A673 (cell line): ENCODE measurements at regions of chr18 and their contacts with region 1.

Region 1: DNA sequence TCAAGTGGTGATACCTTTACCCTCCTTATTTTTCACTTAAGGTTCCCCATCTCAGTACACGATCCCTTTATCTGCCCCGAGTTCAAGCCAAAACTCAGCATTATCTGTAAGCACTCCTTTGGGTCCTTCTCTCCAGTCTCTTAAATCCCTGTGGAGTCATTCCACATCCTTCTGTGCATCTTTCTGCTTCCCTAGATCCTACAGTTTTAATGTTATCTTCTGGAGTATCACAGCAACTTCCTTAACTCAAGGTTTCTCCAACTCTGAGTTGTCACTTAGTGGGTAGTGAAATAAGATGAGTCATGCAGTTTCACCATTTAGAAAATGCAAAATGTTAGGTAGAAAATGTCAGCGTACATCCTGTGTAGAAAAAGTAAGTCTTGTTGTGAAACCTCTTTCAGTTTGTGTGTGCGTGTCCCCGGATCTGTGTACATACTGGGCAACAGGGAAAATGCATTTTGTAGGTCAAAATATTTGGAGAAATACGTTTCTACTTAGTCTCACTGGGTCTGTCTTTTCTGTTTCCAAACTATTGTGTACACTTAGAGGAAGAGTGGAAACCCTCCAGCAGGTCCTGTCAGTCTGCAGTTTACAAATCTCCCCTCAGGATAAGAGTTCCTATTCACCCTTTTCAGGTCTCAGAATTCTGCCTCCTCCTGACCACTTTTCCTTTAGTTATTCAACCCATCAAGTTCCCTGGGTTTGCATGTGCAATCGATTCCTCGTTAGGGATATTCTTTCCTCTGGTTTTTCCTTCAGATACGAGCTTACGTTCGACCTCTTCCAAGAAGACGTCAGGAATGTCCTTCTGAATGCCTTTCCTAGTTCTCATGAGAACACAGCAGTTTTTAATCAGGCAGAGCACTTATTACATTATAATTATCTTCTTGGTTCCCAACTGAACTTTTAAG is 154.8 kb downstream of the TGIF1 start:
- DNase-seq: peak; percentile 61
- H3K4me3 ChIP-seq: peak overlapping the region; percentile 40
- H3K27ac ChIP-seq: peak overlapping the region; percentile 100
- H3K4me1 ChIP-seq: peaks cover 45% of the 10 kb centered on the region
- H3K27me3 ChIP-seq: no peaks in the 10 kb centered on the region
- CTCF ChIP-seq: no peak

Region 2: GRCh38 chr18:3447895-3448837 is 156.6 kb before region 1 on chr18:
- CTCF ChIA-PET with region 1: no interaction called
- POLR2A ChIA-PET with region 1: interaction called, 11 read pairs
- intact Hi-C with region 1: loop called (anchors 2 kb)
- DNase-seq: peak; percentile 99
- H3K4me3 ChIP-seq: peak overlapping the region; percentile 91
- H3K27ac ChIP-seq: peak overlapping the region; percentile 96
- H3K4me1 ChIP-seq: peaks cover 23% of the 10 kb centered on the region
- H3K27me3 ChIP-seq: no peaks in the 10 kb centered on the region
- CTCF ChIP-seq: 0 out of 2 replicates have a peak, but pooled peaks have one; percentile 15

Region 3: DNA sequence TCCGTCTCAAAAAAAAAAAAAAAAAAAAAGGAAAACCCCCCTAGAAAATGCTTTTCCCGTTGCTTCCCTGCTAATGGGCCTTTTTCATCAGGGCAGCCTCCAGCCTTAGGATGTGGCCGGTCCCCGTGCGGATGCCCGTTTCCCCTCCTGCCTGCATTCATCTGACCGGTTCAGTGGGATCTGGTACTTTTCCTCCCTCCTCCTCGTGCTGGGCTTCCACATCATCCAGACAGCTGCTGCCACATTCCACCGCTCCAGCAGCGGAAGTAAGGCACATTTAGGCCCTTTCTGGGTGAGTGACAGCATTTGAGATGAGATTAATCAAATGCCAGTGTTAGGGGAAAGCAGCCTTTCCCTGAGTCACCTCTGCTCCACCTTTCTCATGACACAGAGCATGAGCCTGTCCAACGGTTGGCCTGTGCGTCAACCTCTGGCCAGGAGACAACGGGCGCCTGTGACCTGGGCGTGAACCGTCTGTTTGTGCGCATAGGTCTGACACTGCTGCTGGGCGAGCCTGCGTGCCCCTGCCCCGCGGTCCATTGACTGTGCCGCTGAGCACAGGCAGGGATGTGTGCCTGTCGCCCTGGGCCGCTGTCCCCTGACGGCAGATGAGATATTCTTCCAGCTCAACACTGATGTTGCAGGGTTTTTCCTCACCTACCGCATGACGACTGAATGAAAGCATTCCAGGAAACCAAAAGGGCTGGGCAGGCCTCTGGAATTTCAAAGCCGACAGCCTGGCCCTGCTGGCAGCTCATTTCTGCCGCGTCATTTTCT is 19.2 kb after region 1 on chr18:
- CTCF ChIA-PET with region 1: no interaction called
- POLR2A ChIA-PET with region 1: no interaction called
- intact Hi-C with region 1: loop called (anchors 1 kb)
- DNase-seq: peak; percentile 88
- H3K4me3 ChIP-seq: no peak overlapping the region
- H3K27ac ChIP-seq: peak overlapping the region; percentile 94
- H3K4me1 ChIP-seq: peaks cover 39% of the 10 kb centered on the region
- H3K27me3 ChIP-seq: no peaks in the 10 kb centered on the region
- CTCF ChIP-seq: no peak

Region 4: DNA sequence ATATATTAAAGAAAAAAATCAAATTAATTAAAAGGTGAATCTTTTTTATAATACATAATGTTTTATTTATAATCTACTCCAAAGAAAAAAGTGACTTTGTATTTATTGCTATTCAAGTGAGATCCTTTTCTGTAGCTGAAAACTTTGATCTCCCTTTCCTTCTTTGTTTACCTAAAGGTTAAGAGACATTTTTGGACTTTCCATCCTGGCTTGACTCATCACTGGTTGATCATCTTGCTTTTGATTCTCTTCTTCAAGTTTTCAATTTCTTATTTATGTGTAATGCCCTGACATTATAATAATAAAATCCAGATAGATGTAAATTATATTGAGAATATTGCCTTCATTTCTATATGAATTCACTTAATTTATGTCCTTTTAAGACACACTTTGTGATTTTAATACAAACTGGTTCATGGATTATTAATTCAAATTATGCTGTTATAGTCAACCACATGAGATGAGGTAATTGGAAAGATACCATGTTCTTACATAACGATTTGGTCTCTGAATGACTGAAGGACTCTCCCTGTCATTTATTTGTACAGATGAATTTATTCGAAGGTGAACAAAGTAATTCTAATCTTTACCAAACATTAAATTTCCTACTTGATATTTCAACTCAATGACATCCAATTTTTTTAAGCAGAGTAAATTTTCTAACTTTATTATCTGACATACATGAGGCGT is 29.6 kb after region 1 on chr18:
- CTCF ChIA-PET with region 1: no interaction called
- POLR2A ChIA-PET with region 1: no interaction called
- intact Hi-C with region 1: no loop called
- DNase-seq: no peak
- H3K4me3 ChIP-seq: no peak overlapping the region
- H3K27ac ChIP-seq: no peak overlapping the region
- H3K4me1 ChIP-seq: peaks cover 16% of the 10 kb centered on the region
- H3K27me3 ChIP-seq: no peaks in the 10 kb centered on the region
- CTCF ChIP-seq: no peak

Region 5: DNA sequence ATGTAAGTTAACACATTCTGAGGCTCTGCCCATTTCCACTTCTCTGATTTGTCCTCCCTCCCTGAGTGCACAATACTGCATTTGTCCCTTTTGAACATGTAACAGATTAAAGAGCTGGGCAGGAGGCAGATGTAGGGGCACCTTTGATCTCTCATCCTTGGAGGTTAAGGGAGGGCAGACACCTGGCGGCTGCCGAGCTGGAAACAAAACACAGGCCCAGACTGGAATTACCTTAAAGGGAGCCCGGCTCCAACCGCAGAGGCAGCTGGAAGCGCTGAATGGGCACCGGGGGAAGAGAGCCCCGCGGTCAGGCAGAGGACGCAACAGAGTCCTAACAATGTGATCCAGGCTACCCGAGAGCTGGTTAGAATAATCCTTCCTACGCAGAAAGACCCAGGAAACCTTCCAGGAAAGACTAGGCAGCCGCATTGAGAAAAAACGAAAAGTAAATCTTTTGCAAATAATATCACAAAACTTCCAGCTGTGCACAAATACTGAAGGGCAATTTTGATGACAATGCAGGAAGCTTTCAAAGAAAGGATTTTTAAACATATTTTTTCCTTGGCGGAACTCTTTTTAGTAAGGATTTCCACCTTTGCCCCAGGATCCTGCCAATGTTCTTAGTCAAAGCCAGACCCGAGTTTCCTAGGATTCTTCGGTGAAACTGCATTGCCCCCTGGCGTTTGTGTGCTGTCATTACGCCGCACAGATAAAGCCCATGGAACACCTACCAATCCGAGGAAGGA is 61.2 kb after region 1 on chr18:
- CTCF ChIA-PET with region 1: interaction called, 9 read pairs
- POLR2A ChIA-PET with region 1: no interaction called
- intact Hi-C with region 1: loop called (anchors 1 kb)
- DNase-seq: peak; percentile 94
- H3K4me3 ChIP-seq: peak overlapping the region; percentile 21
- H3K27ac ChIP-seq: peak overlapping the region; percentile 88
- H3K4me1 ChIP-seq: peaks cover 54% of the 10 kb centered on the region
- H3K27me3 ChIP-seq: no peaks in the 10 kb centered on the region
- CTCF ChIP-seq: peak; percentile 96

Region 6: DNA sequence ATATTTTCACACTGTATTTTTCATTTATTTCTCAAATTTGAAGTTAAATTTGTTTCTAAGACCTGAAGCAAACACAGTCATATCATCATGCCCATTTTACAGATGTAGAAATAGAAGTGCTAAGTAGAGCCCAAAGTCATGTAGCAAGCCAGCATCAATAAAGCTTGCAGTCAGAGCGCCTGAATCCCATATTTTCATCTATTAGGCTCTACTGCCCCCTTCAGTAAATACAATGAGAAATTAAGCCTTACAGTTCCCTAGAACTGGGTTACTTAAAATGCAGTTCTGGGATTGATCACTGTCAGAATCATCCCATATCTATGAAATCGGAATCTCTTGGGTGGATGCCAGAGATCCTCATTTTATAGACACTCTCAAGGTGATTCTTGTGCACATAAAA is 265.1 kb after region 1 on chr18:
- CTCF ChIA-PET with region 1: no interaction called
- POLR2A ChIA-PET with region 1: interaction called, 3 read pairs
- intact Hi-C with region 1: loop called (anchors 5 kb)
- DNase-seq: peak; percentile 90
- H3K4me3 ChIP-seq: peak overlapping the region; percentile 10
- H3K27ac ChIP-seq: peak overlapping the region; percentile 88
- H3K4me1 ChIP-seq: peaks cover 74% of the 10 kb centered on the region
- H3K27me3 ChIP-seq: no peaks in the 10 kb centered on the region
- CTCF ChIP-seq: peak; percentile 72